Prostate gland (tissue), 2 donors: ENCODE measurements at regions of chr17 and their contacts with region 1.

Region 1: GRCh38 chr17:78250891-78251794 is 19.7 kb downstream of the TMEM235 start:
- DNase-seq: peak; percentile 77
- H3K4me3 ChIP-seq: no peak overlapping the region
- H3K27ac ChIP-seq: peak overlapping the region in 1 of 2 donors; percentile 48
- H3K4me1 ChIP-seq: no peaks in the 10 kb centered on the region
- H3K27me3 ChIP-seq: no peaks in the 10 kb centered on the region
- CTCF ChIP-seq: peak; percentile 95 to 100 (median 99)
- POLR2A ChIP-seq: no peak

Region 2: GRCh38 chr17:78019976-78020716 is 231.0 kb before region 1 on chr17:
- intact Hi-C with region 1: loop called (anchors 5 kb)
- DNase-seq: no peak
- H3K4me3 ChIP-seq: no peak overlapping the region
- H3K27ac ChIP-seq: no peak overlapping the region
- H3K4me1 ChIP-seq: no peaks in the 10 kb centered on the region
- H3K27me3 ChIP-seq: no peaks in the 10 kb centered on the region
- CTCF ChIP-seq: no peak
- POLR2A ChIP-seq: no peak

Region 3: DNA sequence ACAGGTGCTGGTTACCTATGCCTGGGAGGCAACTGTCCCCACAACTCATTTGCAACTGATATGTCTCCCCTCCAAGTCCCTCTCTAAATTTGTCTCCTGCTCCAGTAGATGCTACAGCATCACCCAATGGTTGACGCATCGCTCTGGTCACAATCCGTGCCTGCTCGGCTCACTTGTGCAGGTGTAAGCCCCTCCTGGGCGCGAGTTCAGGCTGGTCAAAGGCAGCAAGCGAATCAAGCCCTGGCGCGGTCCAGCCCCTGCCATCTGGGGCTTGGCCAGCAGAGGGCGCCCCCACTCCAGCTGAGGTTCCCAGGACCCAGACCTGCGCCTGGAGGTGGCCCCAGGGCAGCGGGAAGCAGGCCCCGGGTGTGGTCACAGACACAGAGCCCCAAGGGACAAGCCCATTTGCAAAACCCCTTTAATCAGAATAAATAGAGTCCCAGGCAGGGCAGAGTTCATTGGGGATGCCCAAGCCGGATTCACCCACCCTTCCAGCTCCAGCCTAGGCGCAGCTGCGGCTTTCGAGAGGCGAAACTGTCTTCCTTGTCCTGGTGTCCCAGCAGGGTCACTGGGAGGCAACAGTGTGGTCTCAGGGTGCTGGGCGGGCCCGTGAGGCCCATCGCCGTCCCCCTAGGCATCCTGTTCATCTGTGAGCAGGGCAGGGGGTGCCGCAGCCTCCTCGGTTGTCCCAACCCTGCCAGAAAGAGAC is 138.5 kb before region 1 on chr17:
- intact Hi-C with region 1: loop called (anchors 5 kb)
- DNase-seq: peak; percentile 50
- H3K4me3 ChIP-seq: no peak overlapping the region
- H3K27ac ChIP-seq: peak overlapping the region in 1 of 2 donors; percentile 89
- H3K4me1 ChIP-seq: peaks cover 23% of the 10 kb centered on the region
- H3K27me3 ChIP-seq: no peaks in the 10 kb centered on the region
- CTCF ChIP-seq: peak; percentile 97 to 100 (median 98)
- POLR2A ChIP-seq: no peak

Region 4: DNA sequence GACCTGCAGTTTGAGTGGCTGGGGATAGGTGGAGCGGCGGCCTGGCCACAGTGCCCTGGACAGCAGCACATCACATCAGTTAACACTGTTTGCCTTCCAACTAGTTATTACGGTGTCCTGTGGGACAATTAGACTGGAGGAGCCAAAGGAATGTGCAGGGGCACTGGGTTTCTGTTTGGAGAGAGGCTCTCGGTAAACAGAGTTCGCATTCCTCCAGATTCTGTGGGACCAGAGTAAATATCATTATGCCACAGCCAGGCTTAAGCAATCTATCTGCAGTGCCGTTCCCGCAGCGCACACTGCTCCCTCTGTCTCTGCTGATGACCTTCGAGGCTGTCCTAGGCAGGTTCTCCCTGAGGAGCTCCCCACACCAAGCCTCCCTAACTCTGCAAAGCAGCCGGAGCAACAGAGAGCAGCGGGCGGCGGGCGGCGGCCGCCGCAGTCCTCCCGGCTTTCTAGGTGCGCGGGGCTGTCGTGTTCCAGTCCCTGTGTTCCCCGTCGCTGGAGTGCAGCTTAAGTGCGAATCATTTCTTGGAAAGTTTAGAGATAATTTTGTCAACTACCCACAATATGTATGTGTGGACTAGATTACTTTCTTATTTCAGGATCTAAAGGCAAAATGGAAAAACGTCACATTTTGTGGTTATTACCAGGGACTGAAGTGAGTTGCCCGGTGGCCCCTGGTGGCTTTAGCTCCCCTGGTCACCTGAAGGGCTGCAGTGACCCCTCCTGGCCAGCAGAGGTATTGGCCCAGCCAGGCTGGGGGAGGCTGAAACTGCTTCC is 170.5 kb after region 1 on chr17:
- intact Hi-C with region 1: loop called (anchors 2 kb)
- DNase-seq: peak; percentile 69
- H3K4me3 ChIP-seq: no peak overlapping the region
- H3K27ac ChIP-seq: no peak overlapping the region
- H3K4me1 ChIP-seq: no peaks in the 10 kb centered on the region
- H3K27me3 ChIP-seq: no peaks in the 10 kb centered on the region
- CTCF ChIP-seq: peak; percentile 88 to 98 (median 98)
- POLR2A ChIP-seq: no peak